Naive thymus-derived CD8-positive, alpha-beta T cell (primary cell): ENCODE measurements at regions of chr14 and their contacts with region 1.

Region 1: DNA sequence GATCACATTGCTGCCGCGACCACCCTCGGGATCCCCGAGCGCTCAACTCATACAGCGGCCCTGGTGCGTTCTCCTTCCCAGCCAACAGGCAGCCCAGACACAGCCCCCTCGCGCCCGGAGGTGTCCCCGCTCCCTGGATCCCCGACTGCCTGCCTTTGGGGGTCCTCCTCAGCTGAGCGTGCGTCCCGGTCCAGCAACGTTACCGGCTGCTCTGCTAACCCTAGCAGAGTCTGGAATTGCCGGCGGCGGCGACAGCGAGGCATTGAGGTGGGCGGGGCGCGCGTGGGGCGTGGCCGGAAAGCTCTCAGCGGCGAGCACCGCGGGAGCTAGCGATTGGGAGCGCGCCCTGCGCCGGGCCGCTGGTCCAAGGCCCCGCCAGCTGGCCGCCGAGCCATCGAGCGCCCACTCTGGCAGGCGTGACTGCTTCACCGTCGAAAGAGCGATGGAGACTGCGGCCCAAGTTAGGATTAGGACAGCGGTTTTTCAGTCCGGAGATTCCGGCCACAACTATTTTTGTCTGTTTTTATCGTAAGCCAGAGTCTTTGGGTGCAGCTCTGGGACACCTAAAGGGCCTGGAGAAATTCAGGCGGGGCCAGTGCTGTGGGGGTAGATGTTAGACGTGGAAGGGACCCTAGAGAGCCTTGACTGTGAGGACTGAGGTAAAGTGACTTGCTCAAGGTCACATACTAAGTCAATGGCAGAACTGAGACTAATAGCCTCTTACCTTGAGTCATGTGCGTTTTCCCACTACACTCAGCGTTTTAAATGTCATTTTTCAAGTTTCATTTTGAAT is at the start of gene HEATR5A:
- DNase-seq: peak; percentile 82 to 94 (median 90)
- ATAC-seq: peak; percentile 95 to 96
- H3K4me3 Mint-ChIP-seq: peak within 1 kb of the TSS; percentile 92 to 100 (median 98)
- H3K27ac Mint-ChIP-seq: peak within 1 kb of the TSS; percentile 72 to 98 (median 93)
- H3K4me1 Mint-ChIP-seq: peaks cover 8 to 28% (median 19%) of the 10 kb centered on the region in 4 donors
- H3K27me3 Mint-ChIP-seq: no peaks in the 10 kb centered on the region
- polyA plus RNA-seq, gene HEATR5A: 4.0 to 5.9 (median 5.5) TPM

Region 2: GRCh38 chr14:31026395-31027118 is 394.0 kb before region 1 on chr14:
- POLR2A ChIA-PET with region 1: interaction called, 11 read pairs
- DNase-seq: peak; percentile 78 to 92 (median 82)
- ATAC-seq: peak; percentile 85 to 86
- H3K4me3 Mint-ChIP-seq: peak overlapping the region; percentile 89 to 99 (median 96)
- H3K27ac Mint-ChIP-seq: peak overlapping the region; percentile 91 to 98 (median 94)
- H3K4me1 Mint-ChIP-seq: peaks cover 36 to 62% (median 58%) of the 10 kb centered on the region in 4 donors
- H3K27me3 Mint-ChIP-seq: no peaks in the 10 kb centered on the region

Region 3: DNA sequence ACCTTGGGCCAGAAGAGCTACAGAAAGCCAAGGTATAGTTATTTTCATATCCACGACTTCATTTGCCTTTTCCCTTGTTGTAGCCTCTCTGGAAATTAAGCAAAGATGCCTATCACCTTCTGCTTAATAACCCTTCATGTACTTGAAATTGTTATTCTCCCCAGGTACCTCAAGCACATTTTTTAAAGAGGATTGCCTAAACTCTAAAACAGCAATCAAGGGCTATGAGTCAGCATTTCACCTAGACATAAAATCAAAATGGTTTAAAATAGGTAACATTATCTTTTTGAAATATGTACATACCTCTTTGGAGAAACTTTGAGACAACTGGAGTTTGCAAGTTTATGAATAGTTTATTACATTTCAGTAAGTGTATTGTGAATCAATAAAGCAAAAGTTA is 25.2 kb after region 1 on chr14:
- POLR2A ChIA-PET with region 1: no interaction called
- DNase-seq: no peak
- ATAC-seq: no peak
- H3K4me3 Mint-ChIP-seq: no peak overlapping the region
- H3K27ac Mint-ChIP-seq: no peak overlapping the region
- H3K4me1 Mint-ChIP-seq: no peaks in the 10 kb centered on the region
- H3K27me3 Mint-ChIP-seq: no peaks in the 10 kb centered on the region

Region 4: DNA sequence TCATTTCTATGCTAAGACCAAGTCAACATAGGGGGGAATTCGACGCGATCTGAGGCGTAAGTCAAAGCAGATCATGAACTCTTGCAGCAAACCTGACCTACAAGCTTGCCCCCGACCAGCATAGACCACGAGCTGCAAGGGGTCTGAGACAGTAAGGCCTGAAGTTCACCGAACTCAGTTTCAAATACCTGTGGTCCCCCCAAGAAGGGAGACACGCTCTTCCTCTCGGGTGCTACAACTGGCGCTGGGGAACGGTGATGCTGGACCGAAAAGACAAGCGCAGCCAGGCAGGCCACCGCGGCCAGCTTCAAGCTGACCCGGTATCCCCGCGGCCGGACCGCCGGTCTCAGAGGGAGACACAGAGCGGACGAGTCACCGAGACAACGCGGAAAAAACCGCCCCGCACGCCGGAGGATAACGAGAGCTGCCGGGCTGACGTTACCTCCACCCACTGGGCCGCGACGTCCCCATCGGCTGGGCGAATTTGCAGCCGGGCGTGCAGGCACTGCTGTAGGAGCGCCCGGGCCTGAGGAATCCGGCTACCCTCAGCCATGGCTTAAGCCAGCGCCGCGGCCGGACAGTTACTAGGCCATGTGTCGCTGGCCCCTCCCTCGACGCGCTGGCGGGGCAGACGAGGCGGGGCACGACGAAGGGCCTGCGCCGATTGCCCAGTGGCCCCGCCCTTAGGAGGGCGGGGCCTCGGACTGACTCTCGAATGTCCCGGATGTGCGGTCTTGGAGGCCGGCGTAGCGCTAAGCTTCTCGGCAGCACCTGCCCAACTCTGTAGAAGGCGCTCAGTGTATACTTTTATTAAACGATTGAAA is 36.5 kb after region 1 on chr14 and contains the start of gene DTD2:
- POLR2A ChIA-PET with region 1: interaction called, 16 read pairs
- DNase-seq: peak; percentile 84 to 94 (median 88)
- ATAC-seq: peak; percentile 95 to 97
- H3K4me3 Mint-ChIP-seq: peak within 1 kb of the TSS; percentile 86 to 98 (median 96)
- H3K27ac Mint-ChIP-seq: peak within 1 kb of the TSS; percentile 92 to 98 (median 96)
- H3K4me1 Mint-ChIP-seq: peaks cover 11 to 43% (median 37%) of the 10 kb centered on the region in 4 donors
- H3K27me3 Mint-ChIP-seq: peaks cover 0 to 5% (median 0%) of the 10 kb centered on the region in 5 donors
- polyA plus RNA-seq, gene DTD2: 19.6 to 26.9 (median 23.1) TPM